Mammary epithelial cell (primary cell): ENCODE measurements at regions of chr20 and their contacts with region 1.

Region 1: DNA sequence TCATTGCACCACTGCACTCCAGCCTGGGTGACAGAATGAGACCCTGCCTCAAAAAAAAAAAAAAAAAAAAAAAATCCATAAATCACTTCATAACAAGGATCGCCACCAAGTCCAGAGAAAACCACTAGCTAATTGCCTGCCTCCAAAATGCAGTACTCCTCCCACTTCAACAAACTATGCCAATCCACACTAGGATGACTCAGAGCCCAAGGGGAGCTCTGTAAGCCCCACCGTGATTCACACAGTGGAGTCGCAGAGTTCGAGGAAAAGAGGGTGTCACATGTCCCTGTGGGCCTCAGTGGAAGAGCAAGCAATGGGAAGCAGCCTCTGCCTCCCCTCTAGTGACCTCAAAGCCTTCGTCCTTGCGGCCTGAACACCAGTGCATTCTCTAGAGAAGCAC is 9.1 kb downstream of the SNHG17 start:
- DNase-seq: peak; percentile 85
- H3K4me3 ChIP-seq: no peak overlapping the region
- H3K27ac ChIP-seq: no peak overlapping the region
- H3K4me1 ChIP-seq: peaks cover 18% of the 10 kb centered on the region
- H3K27me3 ChIP-seq: no peaks in the 10 kb centered on the region
- CTCF ChIP-seq: no peak

Region 2: GRCh38 chr20:38392356-38392755 is 33.6 kb before region 1 on chr20:
- CTCF ChIA-PET with region 1: no interaction called
- dilution Hi-C with region 1: loop called (anchors 5 kb)
- in situ Hi-C with region 1: no loop called
- intact Hi-C with region 1: no loop called
- DNase-seq: no peak
- H3K4me3 ChIP-seq: no peak overlapping the region
- H3K27ac ChIP-seq: no peak overlapping the region
- H3K4me1 ChIP-seq: no peaks in the 10 kb centered on the region
- H3K27me3 ChIP-seq: no peaks in the 10 kb centered on the region
- CTCF ChIP-seq: no peak

Region 3: GRCh38 chr20:38680500-38681306 is 254.7 kb after region 1 on chr20:
- CTCF ChIA-PET with region 1: no interaction called
- dilution Hi-C with region 1: no loop called
- in situ Hi-C with region 1: no loop called
- intact Hi-C with region 1: no loop called
- DNase-seq: peak; percentile 35
- H3K4me3 ChIP-seq: no peak overlapping the region
- H3K27ac ChIP-seq: no peak overlapping the region
- H3K4me1 ChIP-seq: no peaks in the 10 kb centered on the region
- H3K27me3 ChIP-seq: no peaks in the 10 kb centered on the region
- CTCF ChIP-seq: no peak